CD4-positive, alpha-beta T cell (primary cell): ENCODE measurements at regions of chr11 and their contacts with region 1.

Region 1: GRCh38 chr11:72722050-72722748 is 30.0 kb downstream of the ARAP1 start:
- DNase-seq: peak; percentile 71 to 94 (median 84)
- ATAC-seq: peak; percentile 88
- H3K4me3 ChIP-seq: peak overlapping the region; percentile 83
- H3K4me3 Mint-ChIP-seq: peak overlapping the region; percentile 91
- H3K27ac ChIP-seq: peak overlapping the region; percentile 72 to 79
- H3K27ac Mint-ChIP-seq: peak overlapping the region; percentile 90
- H3K4me1 ChIP-seq: peaks cover 74% of the 10 kb centered on the region
- H3K4me1 Mint-ChIP-seq: peaks cover 59% of the 10 kb centered on the region
- H3K27me3 ChIP-seq: no peaks in the 10 kb centered on the region
- H3K27me3 Mint-ChIP-seq: no peaks in the 10 kb centered on the region
- CTCF ChIP-seq: no peak

Region 2: DNA sequence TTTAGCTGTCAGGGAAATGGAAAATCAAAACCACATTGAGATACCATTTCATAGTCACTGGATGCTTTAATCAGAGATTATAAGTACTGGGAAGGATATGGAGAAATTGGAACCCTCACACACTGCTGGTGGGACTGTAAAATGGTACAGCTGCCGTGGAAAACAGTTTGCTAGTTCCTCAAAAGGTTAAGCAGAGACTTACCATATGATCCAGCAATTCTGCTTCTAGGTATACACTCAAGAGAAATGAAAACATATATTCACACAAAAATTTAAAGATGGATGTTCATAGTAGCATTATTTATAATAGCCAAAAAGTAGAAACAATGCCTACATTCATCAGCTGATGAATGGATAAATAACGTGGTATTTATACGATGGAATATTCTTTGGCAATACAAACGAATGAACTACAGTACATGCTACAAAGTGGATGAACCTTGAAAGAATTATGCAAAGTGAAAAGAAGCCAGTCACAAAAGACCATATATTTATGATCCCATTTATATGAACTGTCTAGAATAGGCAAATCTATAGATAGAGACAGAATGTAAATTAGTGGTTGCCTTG is 770.4 kb before region 1 on chr11:
- CTCF ChIA-PET with region 1: no interaction called
- POLR2A ChIA-PET with region 1: no interaction called
- intact Hi-C with region 1: no loop called
- DNase-seq: no peak
- ATAC-seq: no peak
- H3K4me3 ChIP-seq: no peak overlapping the region
- H3K4me3 Mint-ChIP-seq: no peak overlapping the region
- H3K27ac ChIP-seq: no peak overlapping the region
- H3K27ac Mint-ChIP-seq: no peak overlapping the region
- H3K4me1 ChIP-seq: no peaks in the 10 kb centered on the region
- H3K4me1 Mint-ChIP-seq: peaks cover 41% of the 10 kb centered on the region
- H3K27me3 ChIP-seq: no peaks in the 10 kb centered on the region
- H3K27me3 Mint-ChIP-seq: no peaks in the 10 kb centered on the region
- CTCF ChIP-seq: no peak

Region 3: DNA sequence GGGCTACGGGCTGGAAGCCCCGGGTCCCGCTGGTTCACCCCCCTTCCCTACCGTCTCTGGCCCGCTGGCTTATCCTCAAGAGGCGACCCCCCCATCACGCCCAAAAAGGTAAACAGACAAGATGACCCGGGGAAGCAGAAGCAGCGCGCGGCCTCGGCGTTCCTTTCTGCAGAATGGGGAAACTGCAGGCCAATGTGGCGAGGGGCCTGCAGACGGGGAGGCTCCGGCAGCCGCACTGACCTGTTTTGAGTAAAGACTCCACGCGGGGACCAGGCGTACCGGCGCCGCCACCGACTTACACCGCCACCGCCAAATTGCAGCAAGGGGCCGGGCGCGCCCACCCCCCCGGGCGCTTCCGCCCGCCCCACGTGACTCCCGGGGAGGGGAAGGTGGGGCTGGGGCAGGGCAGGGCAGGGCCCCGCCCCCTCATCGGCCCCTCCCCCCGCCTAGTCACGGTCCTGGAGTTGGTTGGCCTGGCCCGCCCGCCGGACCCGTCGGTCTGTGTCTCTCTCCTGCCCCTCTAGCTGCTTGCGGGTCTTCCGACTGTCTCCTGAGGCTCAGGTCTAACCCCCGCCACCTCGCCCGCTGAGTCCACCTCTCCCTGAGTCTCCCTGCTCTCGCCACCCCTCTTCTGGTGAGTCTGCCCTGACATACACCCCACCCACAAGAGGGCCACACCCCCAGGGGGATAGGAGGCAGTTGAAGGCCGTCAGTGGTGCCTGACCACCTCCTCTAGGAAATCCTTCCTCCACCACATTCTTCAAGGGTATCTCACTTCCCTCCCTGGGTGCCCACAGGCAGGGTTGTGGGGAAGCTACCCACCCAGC is 30.1 kb after region 1 on chr11 and contains the start of gene ARAP1:
- CTCF ChIA-PET with region 1: interaction called, 4 read pairs
- POLR2A ChIA-PET with region 1: interaction called, 4 read pairs
- intact Hi-C with region 1: loop called (anchors 1 kb)
- DNase-seq: peak; percentile 65 to 92 (median 80)
- ATAC-seq: peak; percentile 90
- H3K4me3 ChIP-seq: peak within 1 kb of the TSS; percentile 96
- H3K4me3 Mint-ChIP-seq: peak within 1 kb of the TSS; percentile 96
- H3K27ac ChIP-seq: peak within 1 kb of the TSS; percentile 45 to 53
- H3K27ac Mint-ChIP-seq: peak within 1 kb of the TSS; percentile 86
- H3K4me1 ChIP-seq: peaks cover 47% of the 10 kb centered on the region
- H3K4me1 Mint-ChIP-seq: peaks cover 57% of the 10 kb centered on the region
- H3K27me3 ChIP-seq: no peaks in the 10 kb centered on the region
- H3K27me3 Mint-ChIP-seq: no peaks in the 10 kb centered on the region
- CTCF ChIP-seq: no peak
- total RNA-seq, gene ARAP1: 65.7 to 69.8 TPM

Region 4: DNA sequence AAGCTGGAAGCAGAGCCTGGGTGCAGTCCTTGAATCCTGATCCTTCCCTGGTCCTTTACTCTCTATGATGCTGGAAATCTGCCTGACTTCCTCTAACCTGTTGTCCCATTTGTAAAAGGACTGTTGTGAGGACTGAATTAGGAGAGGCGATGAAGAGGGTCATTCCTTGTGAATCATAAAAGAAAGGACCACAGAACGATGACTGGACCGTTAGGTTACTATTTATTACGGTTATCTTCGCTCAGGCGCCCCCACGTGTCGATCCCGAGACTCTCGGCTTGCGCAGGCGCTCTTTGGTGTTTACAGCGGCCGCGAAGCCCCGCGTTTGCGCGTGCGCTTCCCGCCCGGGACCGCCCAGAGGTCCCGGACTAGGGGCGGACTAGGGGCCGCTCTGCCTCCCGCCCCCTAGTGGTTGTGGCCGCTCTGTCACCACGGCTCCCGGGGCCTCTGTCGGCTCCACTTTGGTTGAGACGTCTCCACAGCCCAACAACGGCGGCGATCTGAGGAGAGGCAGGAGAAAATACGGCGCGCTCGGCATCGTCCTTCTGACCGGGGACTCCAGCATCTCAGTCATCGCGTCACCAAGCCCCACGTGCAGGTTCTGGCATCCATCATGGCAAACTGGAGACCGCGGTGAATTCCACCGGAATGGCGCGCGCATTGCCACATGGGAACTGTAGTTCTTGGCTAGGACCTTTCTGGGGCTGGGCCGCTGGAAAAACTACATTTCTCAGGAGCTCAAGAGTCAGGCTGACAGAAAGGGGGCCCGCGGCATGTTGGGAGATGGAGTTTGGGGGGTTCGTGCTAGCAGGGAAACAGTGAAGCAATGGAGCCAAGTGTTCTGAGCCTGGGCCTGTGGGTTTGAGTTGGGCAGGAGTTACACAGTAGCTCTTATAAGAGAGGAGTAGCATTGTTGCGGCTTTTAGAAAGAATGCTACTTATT is 71.5 kb after region 1 on chr11 and contains the start of gene STARD10:
- CTCF ChIA-PET with region 1: interaction called, 80 read pairs
- POLR2A ChIA-PET with region 1: interaction called, 54 read pairs
- intact Hi-C with region 1: loop called (anchors 1 kb)
- DNase-seq: peak; percentile 91 to 98 (median 94)
- ATAC-seq: peak; percentile 90
- H3K4me3 ChIP-seq: peak within 1 kb of the TSS; percentile 82
- H3K4me3 Mint-ChIP-seq: peak within 1 kb of the TSS; percentile 99
- H3K27ac ChIP-seq: peak within 1 kb of the TSS; percentile 99
- H3K27ac Mint-ChIP-seq: peak within 1 kb of the TSS; percentile 99
- H3K4me1 ChIP-seq: peaks cover 23% of the 10 kb centered on the region
- H3K4me1 Mint-ChIP-seq: peaks cover 29% of the 10 kb centered on the region
- H3K27me3 ChIP-seq: no peaks in the 10 kb centered on the region
- H3K27me3 Mint-ChIP-seq: no peaks in the 10 kb centered on the region
- CTCF ChIP-seq: peak; percentile 98
- total RNA-seq, gene STARD10: 10.5 to 12.9 TPM

Region 5: DNA sequence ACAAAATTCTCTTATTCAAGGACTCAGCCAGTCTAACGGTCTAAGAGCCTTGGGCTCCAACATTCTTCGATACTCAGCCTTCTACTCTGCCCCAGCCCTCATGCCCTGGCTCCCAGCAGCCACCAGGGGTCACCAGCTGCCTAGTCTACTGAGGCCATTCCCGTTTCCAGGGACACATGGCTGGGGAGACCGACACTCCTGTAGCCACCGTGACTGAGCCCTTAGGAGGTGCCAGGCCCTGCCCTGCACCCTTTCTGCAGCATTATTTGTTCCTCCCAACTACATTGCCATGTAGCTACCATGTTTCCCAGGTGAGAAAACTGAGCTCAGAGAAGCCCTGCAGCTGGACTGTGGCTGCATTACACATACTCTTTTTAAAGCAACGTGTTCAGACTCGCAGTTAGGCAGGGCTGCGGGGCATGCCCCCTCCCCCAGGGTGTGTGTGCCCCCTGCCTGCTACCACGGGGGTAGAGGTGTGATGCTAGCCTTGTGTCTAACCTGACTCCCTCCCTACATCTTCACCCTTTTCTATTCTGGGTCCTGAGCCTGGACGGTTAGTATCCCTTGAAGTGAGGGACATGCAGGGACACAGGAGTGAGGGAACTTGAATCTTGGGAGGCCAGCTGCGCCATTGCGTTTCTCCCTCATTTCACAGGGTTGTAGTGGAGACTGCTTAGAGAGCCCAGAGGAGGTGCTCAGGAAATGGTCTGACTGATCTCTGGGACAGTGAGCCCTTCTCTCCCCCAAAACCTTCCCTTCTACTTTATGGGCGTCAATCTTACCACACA is 109.5 kb after region 1 on chr11:
- CTCF ChIA-PET with region 1: interaction called, 13 read pairs
- POLR2A ChIA-PET with region 1: interaction called, 4 read pairs
- intact Hi-C with region 1: no loop called
- DNase-seq: peak; percentile 27 to 75 (median 49)
- ATAC-seq: peak; percentile 80
- H3K4me3 ChIP-seq: no peak overlapping the region
- H3K4me3 Mint-ChIP-seq: no peak overlapping the region
- H3K27ac ChIP-seq: peak overlapping the region in 1 of 2 donors; percentile 31
- H3K27ac Mint-ChIP-seq: peak overlapping the region; percentile 79
- H3K4me1 ChIP-seq: peaks cover 15% of the 10 kb centered on the region
- H3K4me1 Mint-ChIP-seq: peaks cover 13% of the 10 kb centered on the region
- H3K27me3 ChIP-seq: no peaks in the 10 kb centered on the region
- H3K27me3 Mint-ChIP-seq: no peaks in the 10 kb centered on the region
- CTCF ChIP-seq: peak; percentile 81

Region 6: GRCh38 chr11:73141848-73142286 is 419.7 kb after region 1 on chr11:
- CTCF ChIA-PET with region 1: no interaction called
- POLR2A ChIA-PET with region 1: interaction called, 11 read pairs
- intact Hi-C with region 1: no loop called
- DNase-seq: peak in 9 of 14 experiments; percentile 35 to 83 (median 57)
- ATAC-seq: peak; percentile 29
- H3K4me3 ChIP-seq: peak overlapping the region; percentile 98
- H3K4me3 Mint-ChIP-seq: peak overlapping the region; percentile 99
- H3K27ac ChIP-seq: peak overlapping the region; percentile 76 to 98
- H3K27ac Mint-ChIP-seq: peak overlapping the region; percentile 96
- H3K4me1 ChIP-seq: peaks cover 26% of the 10 kb centered on the region
- H3K4me1 Mint-ChIP-seq: peaks cover 47% of the 10 kb centered on the region
- H3K27me3 ChIP-seq: no peaks in the 10 kb centered on the region
- H3K27me3 Mint-ChIP-seq: no peaks in the 10 kb centered on the region
- CTCF ChIP-seq: no peak

Region 7: DNA sequence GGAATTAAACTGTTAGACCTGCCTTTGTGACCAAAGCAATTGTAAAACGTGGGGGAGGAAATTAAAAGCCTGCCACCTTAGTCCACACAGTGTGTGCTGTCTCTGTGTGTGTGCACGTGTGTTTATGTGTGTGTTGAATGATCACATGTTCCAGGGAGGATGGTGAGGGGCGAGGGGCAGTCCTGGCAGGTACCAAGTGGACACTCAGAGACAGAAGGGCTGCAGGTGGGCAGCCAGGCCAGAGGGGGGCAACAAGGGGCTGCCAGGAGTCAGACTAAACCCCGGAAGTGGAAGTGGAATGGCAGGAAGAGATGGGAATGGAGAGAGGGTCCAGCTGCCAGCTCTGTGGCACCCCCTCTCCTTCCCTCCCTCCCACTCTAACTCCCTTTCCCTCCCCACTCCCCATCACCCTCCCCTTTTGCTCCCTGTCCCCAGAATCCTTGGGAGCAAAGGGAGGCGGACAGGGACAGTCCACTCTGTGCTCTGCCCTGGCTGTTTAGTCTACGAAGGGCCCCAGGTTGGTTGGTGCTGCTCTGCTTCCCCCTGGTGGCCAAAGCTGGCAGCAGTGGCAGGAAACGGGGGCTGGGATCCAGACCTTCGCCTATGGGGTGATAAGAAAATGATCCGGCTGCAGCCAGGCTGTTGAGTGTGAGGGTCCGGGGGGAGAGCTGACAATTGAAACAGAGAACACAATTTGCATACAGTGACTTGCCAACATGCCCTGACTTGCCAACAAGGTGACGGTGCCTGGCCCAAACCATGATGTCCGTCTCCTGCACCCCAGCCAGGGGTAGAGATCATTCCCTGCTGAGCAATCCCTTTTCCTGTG is 520.3 kb after region 1 on chr11:
- CTCF ChIA-PET with region 1: no interaction called
- POLR2A ChIA-PET with region 1: no interaction called
- intact Hi-C with region 1: loop called in 1 of 2 experiments (anchors 2 kb)
- DNase-seq: peak; percentile 43 to 80 (median 60)
- ATAC-seq: peak; percentile 91
- H3K4me3 ChIP-seq: no peak overlapping the region
- H3K4me3 Mint-ChIP-seq: no peak overlapping the region
- H3K27ac ChIP-seq: no peak overlapping the region
- H3K27ac Mint-ChIP-seq: no peak overlapping the region
- H3K4me1 ChIP-seq: peaks cover 9% of the 10 kb centered on the region
- H3K4me1 Mint-ChIP-seq: no peaks in the 10 kb centered on the region
- H3K27me3 ChIP-seq: no peaks in the 10 kb centered on the region
- H3K27me3 Mint-ChIP-seq: no peaks in the 10 kb centered on the region
- CTCF ChIP-seq: peak; percentile 84